A673 (cell line): ENCODE measurements at regions of chr3 and their contacts with region 1.

Region 1: DNA sequence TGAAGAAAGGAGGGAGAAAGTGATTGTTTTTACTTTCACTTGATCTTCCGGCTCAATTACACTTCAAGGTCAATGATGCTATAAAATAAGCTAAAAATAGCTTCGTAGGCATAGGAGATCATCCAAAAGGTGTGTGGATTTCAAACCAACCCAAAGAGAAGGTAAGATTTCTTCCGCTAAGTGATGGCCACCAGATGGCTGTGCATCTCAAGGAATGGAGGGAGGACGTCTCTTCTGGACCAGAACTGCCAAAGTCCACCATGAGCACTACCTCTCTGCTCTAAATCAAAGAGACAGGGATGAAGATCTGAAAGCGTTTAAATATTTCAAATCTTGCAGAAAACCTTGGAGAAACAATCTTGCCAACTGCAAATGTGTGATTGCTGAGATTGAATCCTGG is 199.1 kb upstream of the ZPLD1 start:
- DNase-seq: peak; percentile 33
- H3K4me3 ChIP-seq: no peak overlapping the region
- H3K27ac ChIP-seq: no peak overlapping the region
- H3K4me1 ChIP-seq: peaks cover 13% of the 10 kb centered on the region
- H3K27me3 ChIP-seq: no peaks in the 10 kb centered on the region
- CTCF ChIP-seq: peak; percentile 62

Region 2: GRCh38 chr3:101791778-101792177 is 443.9 kb before region 1 on chr3:
- CTCF ChIA-PET with region 1: no interaction called
- POLR2A ChIA-PET with region 1: interaction called, 17 read pairs
- intact Hi-C with region 1: no loop called
- DNase-seq: no peak
- H3K4me3 ChIP-seq: no peak overlapping the region
- H3K27ac ChIP-seq: no peak overlapping the region
- H3K4me1 ChIP-seq: no peaks in the 10 kb centered on the region
- H3K27me3 ChIP-seq: no peaks in the 10 kb centered on the region
- CTCF ChIP-seq: no peak

Region 3: GRCh38 chr3:102195198-102195948 is 40.3 kb before region 1 on chr3:
- CTCF ChIA-PET with region 1: no interaction called
- POLR2A ChIA-PET with region 1: no interaction called
- intact Hi-C with region 1: no loop called
- DNase-seq: no peak
- H3K4me3 ChIP-seq: no peak overlapping the region
- H3K27ac ChIP-seq: no peak overlapping the region
- H3K4me1 ChIP-seq: no peaks in the 10 kb centered on the region
- H3K27me3 ChIP-seq: no peaks in the 10 kb centered on the region
- CTCF ChIP-seq: no peak

Region 4: GRCh38 chr3:102673271-102674115 is 437.8 kb after region 1 on chr3:
- CTCF ChIA-PET with region 1: no interaction called
- POLR2A ChIA-PET with region 1: no interaction called
- intact Hi-C with region 1: loop called (anchors 10 kb)
- DNase-seq: peak; percentile 89
- H3K4me3 ChIP-seq: peak overlapping the region; percentile 19
- H3K27ac ChIP-seq: peak overlapping the region; percentile 51
- H3K4me1 ChIP-seq: peaks cover 43% of the 10 kb centered on the region
- H3K27me3 ChIP-seq: no peaks in the 10 kb centered on the region
- CTCF ChIP-seq: peak; percentile 91